Ovary (tissue), 10 donors: ENCODE measurements at regions of chr11 and their contacts with region 1.

Region 1: GRCh38 chr11:6234387-6235107 is at the start of gene FHIP1B:
- DNase-seq: peak; percentile 99 to 100 (median 99)
- H3K4me3 ChIP-seq: peak within 1 kb of the TSS; percentile 88
- H3K27ac ChIP-seq: peak within 1 kb of the TSS; percentile 53 to 82
- H3K4me1 ChIP-seq: peaks cover 4% of the 10 kb centered on the region
- H3K27me3 ChIP-seq: no peaks in the 10 kb centered on the region
- CTCF ChIP-seq: no peak
- EP300 ChIP-seq: no peak
- POLR2A ChIP-seq: peak; percentile 61
- total RNA-seq, gene FHIP1B: 26.9 to 59.1 (median 35.7) TPM

Region 2: GRCh38 chr11:6320411-6321155 is 86.0 kb after region 1 on chr11 and contains the start of gene CAVIN3:
- intact Hi-C with region 1: loop called in 1 of 4 experiments (anchors 10 kb)
- DNase-seq: peak; percentile 86 to 91 (median 89)
- H3K4me3 ChIP-seq: peak within 1 kb of the TSS; percentile 70
- H3K27ac ChIP-seq: peak within 1 kb of the TSS; percentile 96 to 98
- H3K4me1 ChIP-seq: no peaks in the 10 kb centered on the region
- H3K27me3 ChIP-seq: no peaks in the 10 kb centered on the region
- CTCF ChIP-seq: no peak
- EP300 ChIP-seq: no peak
- POLR2A ChIP-seq: peak; percentile 29
- total RNA-seq, gene CAVIN3: 43.3 to 119 (median 70.3) TPM

Region 3: DNA sequence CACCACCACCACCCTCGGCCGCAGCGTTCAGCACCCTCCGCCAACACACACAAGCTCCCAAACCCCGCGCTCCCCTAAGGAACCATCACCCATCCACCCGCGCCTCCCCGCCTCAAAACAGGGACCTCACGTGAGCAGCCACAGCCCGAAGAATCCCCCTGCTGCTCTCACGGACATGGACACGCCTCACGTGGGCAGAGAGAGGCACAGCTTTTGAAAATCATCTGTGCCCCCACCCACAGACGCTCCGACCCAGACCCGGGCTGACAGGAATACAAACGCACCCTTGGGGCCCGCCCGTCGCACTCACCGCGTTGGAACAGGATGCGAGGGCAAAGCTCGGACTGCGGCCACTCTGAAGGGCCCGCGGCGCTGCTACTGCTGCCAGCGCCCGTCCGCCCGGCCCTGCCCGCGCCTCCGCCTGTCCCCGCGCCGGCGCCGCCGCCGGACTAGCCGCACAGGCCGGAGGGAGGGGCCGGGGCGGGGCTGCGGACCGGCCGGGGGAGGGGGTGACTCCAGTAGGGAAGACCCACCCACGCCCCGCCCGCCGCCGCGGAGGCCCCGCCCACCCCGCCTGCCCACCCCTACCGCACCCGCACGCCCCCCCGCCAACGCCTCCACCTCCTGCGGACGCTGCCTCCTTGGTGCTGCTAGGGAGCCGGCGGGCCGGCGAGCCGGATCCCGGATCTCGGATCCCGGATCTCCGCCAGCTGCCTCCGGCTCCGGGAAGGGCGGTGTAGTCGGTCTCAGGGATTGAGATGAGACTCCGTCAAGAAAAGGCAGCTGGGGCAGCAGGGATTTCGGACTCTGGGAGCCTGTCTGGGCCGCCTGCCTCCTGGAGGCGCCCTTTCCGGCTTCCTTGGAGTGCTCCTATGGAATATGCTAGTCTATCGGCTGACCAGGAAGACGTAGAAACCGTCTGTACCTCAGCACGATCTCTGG is 239.2 kb after region 1 on chr11 and contains the start of gene TRIM3:
- intact Hi-C with region 1: loop called in 1 of 4 experiments (anchors 10 kb)
- DNase-seq: peak; percentile 94 to 97 (median 95)
- H3K4me3 ChIP-seq: peak within 1 kb of the TSS; percentile 68
- H3K27ac ChIP-seq: peak within 1 kb of the TSS; percentile 50 to 80
- H3K4me1 ChIP-seq: peaks cover 7% of the 10 kb centered on the region
- H3K27me3 ChIP-seq: no peaks in the 10 kb centered on the region
- CTCF ChIP-seq: peak in 1 of 3 donors; percentile 15
- EP300 ChIP-seq: no peak
- POLR2A ChIP-seq: peak; percentile 77
- total RNA-seq, gene TRIM3: 9.7 to 27.4 (median 19.7) TPM